ENCODE measurements at regions of chr12 and their contacts with region 1.

Region 1: GRCh38 chr12:40261937-40262336 is 37.1 kb downstream of the LRRK2 start:
- DNase-seq: no peak
- ATAC-seq: no peak
- H3K4me3 ChIP-seq: no peak overlapping the region
- H3K4me3 Mint-ChIP-seq: no peak overlapping the region
- H3K27ac ChIP-seq: no peak overlapping the region
- H3K27ac Mint-ChIP-seq: no peak overlapping the region
- H3K4me1 ChIP-seq: no peaks in the 10 kb centered on the region
- H3K4me1 Mint-ChIP-seq: no peaks in the 10 kb centered on the region
- H3K27me3 ChIP-seq: no peaks in the 10 kb centered on the region
- H3K27me3 Mint-ChIP-seq: no peaks in the 10 kb centered on the region

Region 2: GRCh38 chr12:40145896-40146295 is 116.0 kb before region 1 on chr12:
- CTCF ChIA-PET with region 1: no interaction called
- POLR2A ChIA-PET with region 1: interaction called in 1 of 2 experiments, 15 read pairs
- DNase-seq: no peak
- ATAC-seq: no peak
- H3K4me3 ChIP-seq: no peak overlapping the region
- H3K4me3 Mint-ChIP-seq: no peak overlapping the region
- H3K27ac ChIP-seq: no peak overlapping the region
- H3K27ac Mint-ChIP-seq: no peak overlapping the region
- H3K4me1 ChIP-seq: no peaks in the 10 kb centered on the region
- H3K4me1 Mint-ChIP-seq: no peaks in the 10 kb centered on the region
- H3K27me3 ChIP-seq: no peaks in the 10 kb centered on the region
- H3K27me3 Mint-ChIP-seq: peaks cover 4 to 15% of the 10 kb centered on the region in 2 donors

Measured in T-cell (primary cell).